K562 (cell line): ENCODE measurements at regions of chr10 and their contacts with region 1.

Region 1: GRCh38 chr10:7417103-7417623 is 6.3 kb upstream of the SFMBT2 start:
- DNase-seq: peak in 1 of 4 experiments; percentile 39
- ATAC-seq: no peak
- H3K4me3 ChIP-seq: no peak overlapping the region
- H3K27ac ChIP-seq: no peak overlapping the region
- H3K4me1 ChIP-seq: no peaks in the 10 kb centered on the region
- H3K27me3 ChIP-seq: peaks cover 7% of the 10 kb centered on the region in 2 experiments; a peak in 3 of 5 replicates
- CTCF ChIP-seq: peak in 2 of 3 experiments; percentile 27 to 72; a peak in 4 of 6 replicates
- EP300 ChIP-seq: no peak
- POLR2A ChIP-seq: no peak
- RAD21 ChIP-seq: peak; percentile 82 to 84

Region 2: DNA sequence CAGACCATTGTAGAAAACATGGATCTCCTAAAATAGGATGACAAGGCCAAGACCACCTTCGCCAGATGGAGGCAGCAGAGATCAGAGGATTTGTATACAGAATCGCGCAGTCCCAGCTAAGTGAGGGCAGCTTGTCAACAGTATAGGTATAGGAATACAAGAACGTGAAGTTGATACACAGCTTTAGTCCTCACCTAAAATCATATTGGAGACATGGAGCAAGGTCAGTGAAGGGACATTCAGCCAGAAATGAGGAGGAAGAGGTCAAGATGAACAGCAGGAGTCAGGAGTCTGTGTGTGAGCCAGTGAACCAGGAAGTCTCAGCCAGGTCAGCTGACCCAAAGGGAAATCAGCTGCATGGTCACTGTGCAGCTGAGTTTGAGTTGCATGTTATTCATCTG is 573.7 kb before region 1 on chr10:
- CTCF ChIA-PET with region 1: interaction called, 3 read pairs
- POLR2A ChIA-PET with region 1: no interaction called
- in situ Hi-C with region 1: no loop called
- intact Hi-C with region 1: loop called (anchors 5 kb)
- DNase-seq: peak in 3 of 4 experiments; percentile 15 to 54 (median 49)
- ATAC-seq: peak; percentile 79
- H3K4me3 ChIP-seq: no peak overlapping the region
- H3K27ac ChIP-seq: no peak overlapping the region
- H3K4me1 ChIP-seq: no peaks in the 10 kb centered on the region
- H3K27me3 ChIP-seq: no peaks in the 10 kb centered on the region
- CTCF ChIP-seq: peak; percentile 51 to 70 (median 65)
- EP300 ChIP-seq: no peak
- POLR2A ChIP-seq: no peak
- RAD21 ChIP-seq: peak; percentile 41 to 61; a peak in 3 of 4 replicates

Region 3: GRCh38 chr10:8102708-8103401 is 685.7 kb after region 1 on chr10:
- CTCF ChIA-PET with region 1: no interaction called
- POLR2A ChIA-PET with region 1: no interaction called
- in situ Hi-C with region 1: no loop called
- intact Hi-C with region 1: no loop called
- DNase-seq: no peak
- ATAC-seq: no peak
- H3K4me3 ChIP-seq: no peak overlapping the region
- H3K27ac ChIP-seq: no peak overlapping the region
- H3K4me1 ChIP-seq: no peaks in the 10 kb centered on the region; a peak in 1 of 5 replicates
- H3K27me3 ChIP-seq: peaks cover 0 to 28% of the 10 kb centered on the region in 2 experiments; a peak in 4 of 5 replicates
- CTCF ChIP-seq: no peak
- EP300 ChIP-seq: no peak
- POLR2A ChIP-seq: no peak
- RAD21 ChIP-seq: no peak